Gastrocnemius medialis (tissue), 4 donors: ENCODE measurements at regions of chr10 and their contacts with region 1.

Region 1: DNA sequence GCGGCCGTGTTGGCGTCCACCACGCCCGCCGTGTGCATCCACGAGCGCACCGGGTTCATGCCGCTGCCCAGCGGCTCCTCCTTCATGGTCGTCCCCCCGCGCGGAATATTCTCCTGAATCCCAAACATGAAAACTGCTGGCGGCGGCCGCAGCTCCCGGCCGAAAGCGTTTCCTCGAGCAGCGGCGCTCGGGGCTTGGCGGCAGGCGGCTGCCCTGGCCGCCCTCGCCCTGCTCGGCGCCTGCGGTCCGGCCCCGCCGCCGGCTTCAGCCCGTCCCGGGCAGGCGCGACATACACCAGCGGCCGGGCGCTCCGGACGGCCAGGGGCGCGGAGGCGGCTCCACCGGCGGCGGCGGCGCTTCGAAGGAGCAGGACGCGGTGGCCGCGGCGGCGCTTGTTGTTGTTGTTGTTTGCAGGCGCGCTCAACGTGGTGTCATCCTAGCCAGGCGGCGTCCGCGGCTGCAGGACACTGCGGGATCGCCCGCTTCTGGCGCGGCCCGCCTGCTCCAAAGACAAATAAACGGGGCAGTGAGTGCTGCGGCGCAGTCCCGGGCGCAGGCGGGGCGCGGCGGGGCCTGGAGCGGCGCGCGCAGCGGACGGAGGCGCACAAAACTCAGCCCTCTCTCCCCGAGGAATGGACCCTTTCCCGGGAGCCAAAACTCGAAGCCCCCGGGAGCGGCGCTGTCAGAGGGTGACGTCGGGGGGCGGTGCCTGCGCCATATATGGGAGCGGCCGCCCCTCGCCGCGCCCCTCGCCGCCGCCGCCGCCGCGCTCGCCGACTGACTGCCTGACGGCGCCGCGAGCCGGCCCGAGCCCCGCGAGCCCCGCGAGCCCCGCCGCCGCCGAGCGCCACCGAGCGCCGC is at the start of gene EBF3:
- DNase-seq: peak; percentile 65 to 78
- ATAC-seq: peak; percentile 71 to 74
- H3K4me3 ChIP-seq: peak within 1 kb of the TSS; percentile 58 to 79 (median 60)
- H3K27ac ChIP-seq: peak within 1 kb of the TSS; percentile 73 to 84 (median 80)
- H3K4me1 ChIP-seq: peaks cover 0 to 4% of the 10 kb centered on the region in 2 donors
- H3K27me3 ChIP-seq: peaks cover 69 to 86% (median 78%) of the 10 kb centered on the region in 3 donors
- CTCF ChIP-seq: no peak
- POLR2A ChIP-seq: peak; percentile 76 to 90
- total RNA-seq, gene EBF3: 5.5 to 10.4 (median 8.2) TPM

Region 2: DNA sequence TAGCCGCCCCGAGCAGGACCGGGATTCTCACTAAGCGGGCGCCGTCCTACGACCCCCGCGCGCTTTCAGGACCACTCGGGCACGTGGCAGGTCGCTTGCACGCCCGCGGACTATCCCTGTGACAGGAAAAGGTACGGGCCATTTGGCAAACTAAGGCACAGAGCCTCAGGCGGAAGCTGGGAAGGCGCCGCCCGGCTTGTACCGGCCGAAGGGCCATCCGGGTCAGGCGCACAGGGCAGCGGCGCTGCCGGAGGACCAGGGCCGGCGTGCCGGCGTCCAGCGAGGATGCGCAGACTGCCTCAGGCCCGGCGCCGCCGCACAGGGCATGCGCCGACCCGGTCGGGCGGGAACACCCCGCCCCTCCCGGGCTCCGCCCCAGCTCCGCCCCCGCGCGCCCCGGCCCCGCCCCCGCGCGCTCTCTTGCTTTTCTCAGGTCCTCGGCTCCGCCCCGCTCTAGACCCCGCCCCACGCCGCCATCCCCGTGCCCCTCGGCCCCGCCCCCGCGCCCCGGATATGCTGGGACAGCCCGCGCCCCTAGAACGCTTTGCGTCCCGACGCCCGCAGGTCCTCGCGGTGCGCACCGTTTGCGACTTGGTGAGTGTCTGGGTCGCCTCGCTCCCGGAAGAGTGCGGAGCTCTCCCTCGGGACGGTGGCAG is 497.0 kb before region 1 on chr10 and contains the start of gene MGMT:
- in situ Hi-C with region 1: no loop called
- intact Hi-C with region 1: loop called (anchors 10 kb)
- DNase-seq: peak; percentile 84 to 92
- ATAC-seq: peak; percentile 95
- H3K4me3 ChIP-seq: peak within 1 kb of the TSS; percentile 74 to 97 (median 78)
- H3K27ac ChIP-seq: peak within 1 kb of the TSS; percentile 77 to 92 (median 84)
- H3K4me1 ChIP-seq: peaks cover 12 to 19% of the 10 kb centered on the region in 2 donors
- H3K27me3 ChIP-seq: no peaks in the 10 kb centered on the region
- CTCF ChIP-seq: peak in 1 of 5 experiments; percentile 7
- POLR2A ChIP-seq: peak; percentile 43 to 57
- total RNA-seq, gene MGMT: 8.9 to 20.7 (median 17.1) TPM

Region 3: DNA sequence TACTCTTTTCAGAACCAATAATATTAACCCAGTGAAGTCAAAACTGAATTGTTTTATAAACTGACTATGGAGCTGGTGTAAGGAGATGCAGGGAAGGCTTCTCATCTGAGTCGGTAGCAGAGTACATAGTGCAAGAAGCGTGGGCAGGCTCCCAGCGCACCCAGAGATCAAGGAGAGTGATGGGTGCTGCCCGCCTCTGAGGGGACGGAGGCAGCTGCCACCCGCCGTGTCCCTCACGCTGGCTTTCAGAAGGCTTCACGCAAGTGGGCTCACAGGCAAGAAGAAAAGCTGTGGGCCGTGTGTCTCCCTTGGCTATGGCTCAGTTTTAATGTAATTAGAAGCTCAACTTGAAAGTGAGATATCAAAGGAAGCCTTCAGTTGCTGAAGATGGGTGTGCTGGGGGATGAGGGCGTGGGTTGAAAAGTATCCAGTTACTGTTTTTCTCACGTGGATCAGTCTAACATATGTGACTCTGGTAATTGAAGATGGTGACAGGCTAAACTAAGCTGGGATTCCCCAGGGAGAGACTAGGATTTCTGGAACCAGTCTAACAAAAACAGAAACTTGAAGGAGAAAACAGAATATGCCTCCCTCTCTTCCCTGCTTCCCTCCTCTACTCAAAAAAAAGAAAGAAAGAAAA is 337.0 kb before region 1 on chr10:
- in situ Hi-C with region 1: no loop called
- intact Hi-C with region 1: no loop called
- DNase-seq: no peak
- ATAC-seq: no peak
- H3K4me3 ChIP-seq: peak overlapping the region in 1 of 4 donors; percentile 7
- H3K27ac ChIP-seq: no peak overlapping the region
- H3K4me1 ChIP-seq: peaks cover 0 to 10% of the 10 kb centered on the region in 2 donors
- H3K27me3 ChIP-seq: no peaks in the 10 kb centered on the region
- CTCF ChIP-seq: no peak
- POLR2A ChIP-seq: no peak

Region 4: GRCh38 chr10:129814681-129815646 is 148.9 kb before region 1 on chr10:
- in situ Hi-C with region 1: no loop called
- intact Hi-C with region 1: no loop called
- DNase-seq: no peak
- ATAC-seq: no peak
- H3K4me3 ChIP-seq: no peak overlapping the region
- H3K27ac ChIP-seq: no peak overlapping the region
- H3K4me1 ChIP-seq: no peaks in the 10 kb centered on the region
- H3K27me3 ChIP-seq: peaks cover 0 to 4% (median 0%) of the 10 kb centered on the region in 3 donors
- CTCF ChIP-seq: no peak
- POLR2A ChIP-seq: no peak

Region 5: GRCh38 chr10:129912166-129912917 is 51.5 kb before region 1 on chr10:
- in situ Hi-C with region 1: no loop called
- intact Hi-C with region 1: no loop called
- DNase-seq: no peak
- ATAC-seq: no peak
- H3K4me3 ChIP-seq: no peak overlapping the region
- H3K27ac ChIP-seq: no peak overlapping the region
- H3K4me1 ChIP-seq: peaks cover 5 to 10% of the 10 kb centered on the region in 2 donors
- H3K27me3 ChIP-seq: no peaks in the 10 kb centered on the region
- CTCF ChIP-seq: no peak
- POLR2A ChIP-seq: no peak

Region 6: GRCh38 chr10:130013335-130014262 is 49.7 kb after region 1 on chr10:
- in situ Hi-C with region 1: no loop called
- intact Hi-C with region 1: no loop called
- DNase-seq: no peak
- ATAC-seq: no peak
- H3K4me3 ChIP-seq: no peak overlapping the region
- H3K27ac ChIP-seq: no peak overlapping the region
- H3K4me1 ChIP-seq: no peaks in the 10 kb centered on the region
- H3K27me3 ChIP-seq: peaks cover 0 to 3% (median 0%) of the 10 kb centered on the region in 3 donors
- CTCF ChIP-seq: no peak
- POLR2A ChIP-seq: no peak